PC-3 (cell line): ENCODE measurements at regions of chr3 and their contacts with region 1.

Region 1: GRCh38 chr3:52685709-52686691 is at the starts of genes GNL3 and PBRM1:
- DNase-seq: peak; percentile 98
- ATAC-seq: peak; percentile 68
- H3K4me3 ChIP-seq: peak within 1 kb of the TSS; percentile 89
- H3K27ac ChIP-seq: peak within 1 kb of the TSS; percentile 72
- H3K4me1 ChIP-seq: peaks cover 53% of the 10 kb centered on the region
- H3K27me3 ChIP-seq: no peaks in the 10 kb centered on the region
- CTCF ChIP-seq: no peak
- total RNA-seq, gene GNL3: 219 TPM in 2 replicates
- total RNA-seq, gene PBRM1: 59.7 and 67.8 TPM in 2 replicates

Region 2: DNA sequence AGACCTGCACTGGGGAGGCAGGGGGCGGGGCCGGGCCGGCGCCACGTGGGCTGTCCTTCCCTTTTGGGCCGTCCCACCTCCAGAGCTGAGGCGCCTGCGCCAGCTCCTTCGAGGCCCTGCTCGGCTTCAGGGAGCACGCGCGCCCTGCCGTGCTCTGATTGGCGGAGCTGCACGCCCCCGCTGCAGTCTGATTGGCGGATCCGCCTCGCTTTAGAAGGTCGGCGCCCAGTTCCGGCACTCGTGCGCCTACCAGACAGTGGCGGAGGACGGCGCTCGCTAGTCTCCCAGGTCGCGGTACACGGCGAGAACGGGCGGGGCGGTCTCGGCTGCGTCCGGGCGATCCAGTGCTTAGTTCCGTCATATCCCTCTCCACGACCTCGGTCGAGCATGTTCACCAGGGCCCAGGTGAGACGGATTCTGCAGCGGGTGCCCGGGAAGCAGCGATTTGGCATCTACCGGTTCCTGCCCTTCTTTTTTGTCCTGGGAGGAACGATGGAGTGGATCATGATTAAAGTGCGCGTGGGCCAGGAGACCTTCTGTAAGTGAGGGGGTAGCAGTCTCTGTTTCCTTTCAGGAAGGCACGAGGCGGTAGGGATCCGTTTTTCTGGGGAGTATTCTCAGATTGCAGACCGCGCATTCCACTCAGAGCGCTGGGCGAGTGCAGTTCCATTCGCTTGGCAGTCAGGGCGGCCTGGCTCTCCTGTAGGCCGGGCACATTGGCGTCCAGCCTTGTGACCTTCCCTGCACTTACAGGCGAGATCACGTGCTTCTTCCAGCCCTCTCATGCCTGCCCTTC is 149.4 kb before region 1 on chr3 and contains the start of gene UQCC5:
- CTCF ChIA-PET with region 1: no interaction called
- POLR2A ChIA-PET with region 1: no interaction called
- intact Hi-C with region 1: loop called (anchors 10 kb)
- DNase-seq: peak; percentile 99
- ATAC-seq: peak; percentile 82
- H3K4me3 ChIP-seq: peak within 1 kb of the TSS; percentile 90
- H3K27ac ChIP-seq: peak within 1 kb of the TSS; percentile 48
- H3K4me1 ChIP-seq: peaks cover 46% of the 10 kb centered on the region
- H3K27me3 ChIP-seq: no peaks in the 10 kb centered on the region
- CTCF ChIP-seq: no peak
- total RNA-seq, gene UQCC5: 14.5 and 26.1 TPM in 2 replicates

Region 3: DNA sequence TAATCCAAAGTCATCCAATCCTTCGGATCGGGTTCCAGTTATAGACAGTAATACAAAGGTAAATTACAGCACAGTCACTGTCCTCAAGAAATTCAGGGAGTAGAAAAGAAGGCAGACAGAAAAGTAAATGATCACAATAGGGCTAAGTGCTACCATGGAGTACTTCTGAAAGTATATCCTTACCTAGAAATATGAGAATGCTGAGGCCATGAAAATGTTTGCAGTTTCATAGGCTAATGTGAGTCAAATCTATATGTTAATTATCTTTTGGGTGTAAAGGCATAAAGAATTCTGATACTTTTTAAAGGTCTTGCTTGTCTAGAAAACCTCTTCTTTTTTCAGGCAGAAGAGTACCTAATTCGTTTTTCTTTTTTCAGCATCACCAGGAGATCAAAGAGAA is 30.1 kb before region 1 on chr3:
- CTCF ChIA-PET with region 1: no interaction called
- POLR2A ChIA-PET with region 1: no interaction called
- intact Hi-C with region 1: no loop called
- DNase-seq: no peak
- ATAC-seq: no peak
- H3K4me3 ChIP-seq: no peak overlapping the region
- H3K27ac ChIP-seq: no peak overlapping the region
- H3K4me1 ChIP-seq: no peaks in the 10 kb centered on the region
- H3K27me3 ChIP-seq: no peaks in the 10 kb centered on the region
- CTCF ChIP-seq: no peak

Region 4: GRCh38 chr3:52670621-52671521 is 15.1 kb before region 1 on chr3:
- CTCF ChIA-PET with region 1: no interaction called
- POLR2A ChIA-PET with region 1: no interaction called
- intact Hi-C with region 1: loop called (anchors 1 kb)
- DNase-seq: peak; percentile 99
- ATAC-seq: peak; percentile 96
- H3K4me3 ChIP-seq: peak overlapping the region; percentile 49
- H3K27ac ChIP-seq: peak overlapping the region; percentile 97
- H3K4me1 ChIP-seq: peaks cover 26% of the 10 kb centered on the region
- H3K27me3 ChIP-seq: no peaks in the 10 kb centered on the region
- CTCF ChIP-seq: 0 out of 2 replicates have a peak, but pooled peaks have one; percentile 11

Region 5: GRCh38 chr3:52705688-52706686 is 20.0 kb after region 1 on chr3 and contains the starts of genes GLT8D1 and SPCS1:
- CTCF ChIA-PET with region 1: no interaction called
- POLR2A ChIA-PET with region 1: interaction called, 3 read pairs
- intact Hi-C with region 1: loop called (anchors 2 kb)
- DNase-seq: peak; percentile 86
- ATAC-seq: peak; percentile 91
- H3K4me3 ChIP-seq: peak within 1 kb of the TSS; percentile 95
- H3K27ac ChIP-seq: peak within 1 kb of the TSS; percentile 36
- H3K4me1 ChIP-seq: peaks cover 18% of the 10 kb centered on the region
- H3K27me3 ChIP-seq: no peaks in the 10 kb centered on the region
- CTCF ChIP-seq: no peak
- total RNA-seq, gene GLT8D1: 53.6 and 70.2 TPM in 2 replicates
- total RNA-seq, gene SPCS1: 114 and 133 TPM in 2 replicates